Cardiac septum (tissue), 1 donor: ENCODE measurements at regions of chrX and their contacts with region 1.

Region 1: GRCh38 chrX:17242470-17242869 is 132.5 kb upstream of the NHS start:
- DNase-seq: no peak

Region 2: DNA sequence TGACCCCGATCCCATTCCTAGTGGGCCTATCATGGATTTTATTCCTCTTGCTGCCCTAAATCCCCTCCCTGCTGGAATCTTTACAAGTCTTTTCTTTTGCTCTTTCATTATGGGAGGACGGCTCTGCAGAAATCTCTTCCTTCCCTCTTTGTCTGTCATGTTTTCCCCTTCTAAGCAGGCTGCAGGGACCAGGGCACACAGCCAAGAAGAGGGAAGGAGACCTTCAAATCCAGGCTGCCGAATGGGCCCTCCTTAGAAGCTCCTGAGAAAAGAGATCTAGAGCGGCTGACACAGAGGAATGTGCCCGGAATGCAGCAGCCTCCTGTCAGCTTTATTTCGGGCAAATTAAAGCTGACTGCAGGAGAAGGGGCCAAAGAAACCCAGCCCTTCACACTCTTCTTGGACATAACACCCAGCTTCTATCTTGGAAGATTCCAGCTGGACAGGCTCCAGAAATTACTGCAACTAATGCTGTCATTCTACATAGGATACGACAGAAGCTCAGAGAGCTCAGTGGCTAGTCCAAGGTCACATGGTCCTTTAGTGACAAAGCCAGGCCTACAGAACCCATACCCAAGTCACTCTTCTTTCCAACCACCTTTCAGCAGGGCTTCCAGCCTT is 55.2 kb before region 1 on chrX:
- intact Hi-C with region 1: no loop called
- DNase-seq: no peak

Region 3: GRCh38 chrX:17689971-17690409 is 447.5 kb after region 1 on chrX:
- intact Hi-C with region 1: loop called (anchors 2 kb)
- DNase-seq: no peak